ENCODE measurements at regions of chr6 and their contacts with region 1.

Region 1: DNA sequence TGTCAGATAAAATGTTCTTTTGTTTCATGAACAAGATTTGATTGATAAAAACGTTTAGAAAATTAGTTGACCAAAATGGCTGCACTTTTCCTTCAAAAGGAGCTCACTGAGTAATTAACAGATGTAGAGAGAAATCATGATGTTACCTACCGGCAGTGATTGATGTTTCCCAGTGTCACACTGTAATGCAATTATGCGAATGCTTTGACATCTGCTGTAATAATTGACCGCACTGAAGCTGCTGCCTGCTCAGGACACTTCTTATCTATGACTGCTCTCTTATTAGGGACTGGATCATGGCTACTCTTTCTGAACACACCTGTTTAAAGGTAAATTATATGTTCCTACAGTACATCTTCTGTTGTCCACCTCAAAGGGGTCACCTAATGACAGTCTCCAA is 94.6 kb downstream of the GPR63 start:
- DNase-seq: no peak

Region 2: DNA sequence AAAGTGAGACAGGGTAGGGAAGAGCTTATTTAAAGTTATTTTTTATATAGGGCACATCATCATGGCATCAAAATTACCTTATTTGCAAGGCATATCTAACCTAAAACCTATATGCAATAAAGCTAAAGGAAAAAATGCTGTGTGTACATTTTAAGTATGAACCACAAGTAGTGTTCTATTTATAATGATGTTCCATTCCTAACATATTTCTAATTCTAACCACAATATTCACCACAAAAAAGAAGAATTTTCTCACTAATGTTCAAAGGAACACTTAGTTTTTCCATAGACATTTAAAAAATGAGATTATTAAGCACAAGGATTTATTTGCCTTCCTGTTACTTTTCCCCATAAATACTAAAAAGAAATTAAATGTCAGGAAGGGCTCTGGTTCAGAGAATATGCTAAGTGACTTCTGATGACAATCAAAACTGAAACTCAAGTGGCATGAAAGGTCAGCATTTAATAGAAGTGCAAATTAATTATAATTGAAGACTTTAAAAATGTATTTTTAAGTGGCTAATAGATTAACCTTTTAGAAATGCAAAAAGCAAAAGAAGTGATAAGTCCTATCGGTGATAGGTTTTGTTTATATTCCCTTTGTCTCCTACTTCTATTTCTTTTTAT is 69.5 kb after region 1 on chr6:
- CTCF ChIA-PET with region 1: no interaction called
- POLR2A ChIA-PET with region 1: no interaction called
- DNase-seq: no peak

Region 3: GRCh38 chr6:97563529-97563928 is 820.8 kb after region 1 on chr6:
- CTCF ChIA-PET with region 1: interaction called, 12 read pairs
- POLR2A ChIA-PET with region 1: no interaction called
- DNase-seq: no peak

Measured in HEK293T (cell line).